Caco-2 (cell line): ENCODE measurements at regions of chr17 and their contacts with region 1.

Region 1: GRCh38 chr17:66625311-66625775 is 209.6 kb upstream of the CACNG5 start:
- DNase-seq: no peak
- H3K4me3 ChIP-seq: no peak overlapping the region
- H3K4me3 Mint-ChIP-seq: no peak overlapping the region
- H3K27ac Mint-ChIP-seq: no peak overlapping the region
- H3K4me1 ChIP-seq: peaks cover 12% of the 10 kb centered on the region; the same call in 1 of the 2 replicates
- H3K4me1 Mint-ChIP-seq: peaks cover 16% of the 10 kb centered on the region
- H3K27me3 ChIP-seq: no peaks in the 10 kb centered on the region
- H3K27me3 Mint-ChIP-seq: no peaks in the 10 kb centered on the region
- CTCF ChIP-seq: peak; percentile 53 to 54

Region 2: GRCh38 chr17:66200685-66201092 is 424.7 kb before region 1 on chr17:
- CTCF ChIA-PET with region 1: no interaction called
- POLR2A ChIA-PET with region 1: no interaction called
- intact Hi-C with region 1: loop called (anchors 2 kb)
- DNase-seq: peak; percentile 77 to 79
- H3K4me3 ChIP-seq: no peak overlapping the region
- H3K4me3 Mint-ChIP-seq: no peak overlapping the region
- H3K27ac Mint-ChIP-seq: peak overlapping the region; percentile 27
- H3K4me1 ChIP-seq: peaks cover 5% of the 10 kb centered on the region
- H3K4me1 Mint-ChIP-seq: peaks cover 7% of the 10 kb centered on the region
- H3K27me3 ChIP-seq: no peaks in the 10 kb centered on the region
- H3K27me3 Mint-ChIP-seq: no peaks in the 10 kb centered on the region
- CTCF ChIP-seq: peak; percentile 80 to 83

Region 3: GRCh38 chr17:66580184-66580955 is 45.0 kb before region 1 on chr17:
- CTCF ChIA-PET with region 1: no interaction called
- POLR2A ChIA-PET with region 1: no interaction called
- intact Hi-C with region 1: loop called (anchors 2 kb)
- DNase-seq: peak; percentile 67 to 72
- H3K4me3 ChIP-seq: no peak overlapping the region
- H3K4me3 Mint-ChIP-seq: peak overlapping the region; percentile 26
- H3K27ac Mint-ChIP-seq: peak overlapping the region; percentile 83
- H3K4me1 ChIP-seq: peaks cover 44% of the 10 kb centered on the region
- H3K4me1 Mint-ChIP-seq: peaks cover 39% of the 10 kb centered on the region
- H3K27me3 ChIP-seq: no peaks in the 10 kb centered on the region
- H3K27me3 Mint-ChIP-seq: no peaks in the 10 kb centered on the region
- CTCF ChIP-seq: no peak

Region 4: GRCh38 chr17:66636111-66636510 is 10.8 kb after region 1 on chr17:
- CTCF ChIA-PET with region 1: no interaction called
- POLR2A ChIA-PET with region 1: no interaction called
- intact Hi-C with region 1: no loop called
- DNase-seq: no peak
- H3K4me3 ChIP-seq: no peak overlapping the region
- H3K4me3 Mint-ChIP-seq: no peak overlapping the region
- H3K27ac Mint-ChIP-seq: no peak overlapping the region
- H3K4me1 ChIP-seq: no peaks in the 10 kb centered on the region
- H3K4me1 Mint-ChIP-seq: no peaks in the 10 kb centered on the region
- H3K27me3 ChIP-seq: no peaks in the 10 kb centered on the region
- H3K27me3 Mint-ChIP-seq: no peaks in the 10 kb centered on the region
- CTCF ChIP-seq: no peak

Region 5: DNA sequence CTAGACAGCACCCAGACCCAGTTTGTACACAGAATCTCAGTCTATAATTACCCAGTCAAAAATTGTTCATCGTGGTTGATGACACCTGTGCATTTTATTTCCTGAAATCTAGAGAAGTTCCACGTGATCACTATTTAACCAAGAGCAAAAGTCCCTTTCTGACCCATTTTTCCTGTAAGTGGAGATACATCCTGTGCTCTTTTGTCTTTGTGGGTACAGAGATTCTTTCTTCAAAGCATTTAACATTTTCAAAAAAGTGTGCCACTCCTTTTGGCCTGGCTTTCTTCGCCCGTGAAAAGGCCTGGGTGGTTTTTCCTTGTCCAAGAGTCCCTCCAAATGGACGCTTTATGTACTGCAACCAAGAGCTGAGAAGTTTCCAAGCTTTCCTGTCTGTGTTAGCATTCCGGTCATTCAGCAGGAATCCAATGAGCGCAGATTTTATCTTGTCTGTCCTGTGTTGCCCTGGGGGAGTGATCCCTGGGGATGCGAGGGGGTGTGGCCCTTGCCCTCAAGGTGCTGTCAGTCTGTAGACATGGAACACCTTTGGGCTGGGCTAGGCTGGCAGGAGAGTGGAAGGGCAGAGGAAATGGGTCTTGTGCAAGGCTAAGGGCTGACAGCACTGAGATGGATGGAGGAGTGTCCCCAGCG is 48.4 kb after region 1 on chr17:
- CTCF ChIA-PET with region 1: interaction called, 3 read pairs
- POLR2A ChIA-PET with region 1: no interaction called
- intact Hi-C with region 1: loop called (anchors 10 kb)
- DNase-seq: peak; percentile 54 to 72
- H3K4me3 ChIP-seq: no peak overlapping the region
- H3K4me3 Mint-ChIP-seq: no peak overlapping the region
- H3K27ac Mint-ChIP-seq: peak overlapping the region; percentile 14
- H3K4me1 ChIP-seq: peaks cover 13% of the 10 kb centered on the region
- H3K4me1 Mint-ChIP-seq: peaks cover 19% of the 10 kb centered on the region
- H3K27me3 ChIP-seq: no peaks in the 10 kb centered on the region
- H3K27me3 Mint-ChIP-seq: no peaks in the 10 kb centered on the region
- CTCF ChIP-seq: peak; percentile 66 to 81